ENCODE measurements at regions of chr14 and their contacts with region 1.

Region 1: GRCh38 chr14:102316743-102317563 is 2.6 kb upstream of the ZNF839 start:
- DNase-seq: peak; percentile 91
- H3K4me3 Mint-ChIP-seq: peak overlapping the region; percentile 83
- H3K27ac Mint-ChIP-seq: peak overlapping the region; percentile 89
- H3K4me1 Mint-ChIP-seq: peaks cover 53% of the 10 kb centered on the region
- H3K27me3 Mint-ChIP-seq: no peaks in the 10 kb centered on the region

Region 2: DNA sequence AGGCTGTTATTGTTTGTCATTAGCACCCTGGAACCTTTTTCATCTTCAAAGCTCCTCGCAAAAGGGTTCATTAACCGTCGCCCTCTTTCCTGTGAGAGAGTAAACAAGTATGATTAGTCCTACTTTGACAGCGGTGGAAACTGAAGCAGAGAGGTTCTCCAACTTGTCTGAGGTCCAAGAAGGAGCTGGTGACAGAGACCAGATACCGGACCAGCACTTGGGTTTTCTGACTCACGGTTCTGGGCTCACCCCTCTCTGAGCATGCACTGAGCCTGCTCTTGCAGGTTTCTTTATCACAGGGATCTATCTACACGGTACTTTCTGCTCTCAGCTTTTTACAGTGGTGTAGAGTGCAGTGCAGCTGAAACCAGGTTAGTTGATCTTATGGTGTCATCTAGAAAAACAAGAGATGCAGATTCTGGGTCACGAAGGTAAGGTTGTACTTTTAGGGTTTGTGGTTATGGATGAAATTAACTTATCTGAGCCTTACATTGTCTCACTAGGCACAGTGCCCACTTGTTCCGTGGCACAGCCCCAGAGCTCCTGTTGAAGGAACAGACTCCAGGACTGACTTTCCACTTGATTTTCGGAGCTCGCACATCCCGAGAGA is 493.3 kb before region 1 on chr14:
- intact Hi-C with region 1: loop called (anchors 5 kb)
- DNase-seq: peak; percentile 75
- H3K4me3 Mint-ChIP-seq: peak overlapping the region; percentile 75
- H3K27ac Mint-ChIP-seq: peak overlapping the region; percentile 97
- H3K4me1 Mint-ChIP-seq: peaks cover 80% of the 10 kb centered on the region
- H3K27me3 Mint-ChIP-seq: no peaks in the 10 kb centered on the region

Region 3: GRCh38 chr14:101964297-101965144 is 352.4 kb before region 1 on chr14 and contains the start of gene DYNC1H1:
- intact Hi-C with region 1: loop called (anchors 1 kb)
- DNase-seq: peak; percentile 88
- H3K4me3 Mint-ChIP-seq: peak within 1 kb of the TSS; percentile 92
- H3K27ac Mint-ChIP-seq: peak within 1 kb of the TSS; percentile 90
- H3K4me1 Mint-ChIP-seq: peaks cover 30% of the 10 kb centered on the region
- H3K27me3 Mint-ChIP-seq: no peaks in the 10 kb centered on the region
- total RNA-seq, gene DYNC1H1: 286 and 287 TPM in 2 replicates

Region 4: DNA sequence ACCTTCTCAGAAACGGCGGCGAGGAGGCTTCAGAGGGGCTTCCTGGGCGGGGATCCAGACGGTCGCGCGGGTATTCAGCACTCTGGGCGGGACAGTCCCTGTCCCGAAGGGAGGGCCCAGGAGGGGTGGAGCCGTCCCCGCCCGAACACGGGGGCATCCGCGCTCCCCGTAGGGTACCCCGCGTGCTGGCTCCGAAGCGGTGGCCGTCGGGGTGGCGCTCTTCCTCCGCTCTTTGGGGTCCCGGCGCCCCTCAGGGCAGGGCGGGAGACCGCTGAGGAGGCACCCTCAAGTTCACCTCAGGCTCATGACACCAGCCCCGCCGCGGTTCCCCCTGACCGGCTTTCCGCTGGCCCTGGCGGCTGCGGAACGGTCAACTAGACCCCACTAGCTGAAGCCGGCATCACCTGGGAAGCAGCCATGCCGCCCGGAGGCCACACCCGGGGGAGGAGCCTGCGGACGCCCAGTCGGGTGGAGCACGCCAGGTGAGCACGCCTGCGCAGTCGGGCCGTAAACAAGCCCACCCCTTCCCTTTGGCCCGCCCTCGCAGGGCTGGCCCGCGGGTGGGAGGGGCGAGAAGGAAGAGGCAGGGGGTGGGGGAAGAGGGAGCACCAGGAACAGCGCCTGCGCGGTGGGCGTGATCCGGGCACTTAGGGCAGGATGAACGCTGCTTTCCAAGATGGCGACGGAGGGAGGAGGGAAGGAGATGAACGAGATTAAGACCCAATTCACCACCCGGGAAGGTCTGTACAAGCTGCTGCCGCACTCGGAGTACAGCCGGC is 177.5 kb before region 1 on chr14 and contains the start of gene WDR20:
- intact Hi-C with region 1: loop called (anchors 5 kb)
- DNase-seq: peak; percentile 98
- H3K4me3 Mint-ChIP-seq: peak within 1 kb of the TSS; percentile 94
- H3K27ac Mint-ChIP-seq: peak within 1 kb of the TSS; percentile 94
- H3K4me1 Mint-ChIP-seq: peaks cover 17% of the 10 kb centered on the region
- H3K27me3 Mint-ChIP-seq: no peaks in the 10 kb centered on the region
- total RNA-seq, gene WDR20: 35.3 and 37.0 TPM in 2 replicates

Region 5: DNA sequence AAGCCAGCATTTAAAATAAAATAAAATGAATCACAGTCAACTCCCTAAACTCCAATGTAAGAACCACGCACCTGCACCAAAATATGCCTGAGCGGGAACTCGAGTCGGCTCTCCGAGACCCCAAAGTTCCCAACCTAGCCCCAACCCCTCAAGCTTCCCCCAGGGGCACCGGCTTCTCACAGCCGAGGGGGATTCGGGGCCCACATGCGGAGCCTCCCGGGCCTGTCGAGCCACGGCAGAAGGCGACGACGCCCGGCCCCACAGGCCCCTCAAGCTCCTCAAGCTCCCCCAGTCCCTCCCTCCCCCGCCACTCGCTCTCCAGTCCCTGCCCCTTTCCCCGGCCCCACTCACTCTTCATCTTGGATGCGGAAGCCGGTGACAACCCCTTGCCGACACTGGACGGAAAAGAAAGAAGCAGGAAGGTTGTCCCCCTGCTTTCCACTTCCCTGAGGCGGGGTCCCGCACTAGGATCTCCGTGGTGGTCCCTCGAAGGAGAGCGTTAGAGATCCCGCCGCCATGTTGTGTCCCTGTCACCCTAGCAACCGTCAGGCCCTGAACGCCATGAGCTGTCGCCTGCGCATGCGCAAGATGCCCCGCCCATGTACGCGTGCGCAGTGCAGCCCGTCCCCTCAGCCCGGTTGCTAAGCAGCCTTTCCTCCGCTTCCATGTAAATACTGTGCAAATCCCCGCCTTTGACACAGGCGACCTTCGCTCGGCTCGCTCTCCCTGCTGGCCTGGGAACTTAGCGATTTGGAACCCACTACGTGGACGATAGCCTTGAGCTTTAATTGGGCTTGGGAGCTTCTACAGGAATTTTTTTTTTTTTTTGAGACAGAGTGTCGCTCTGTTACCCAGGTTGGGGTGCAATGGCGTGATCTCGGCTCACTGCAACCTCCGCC is 12.1 kb before region 1 on chr14 and contains the start of gene MOK:
- intact Hi-C with region 1: loop called (anchors 1 kb)
- DNase-seq: peak; percentile 98
- H3K4me3 Mint-ChIP-seq: peak within 1 kb of the TSS; percentile 92
- H3K27ac Mint-ChIP-seq: peak within 1 kb of the TSS; percentile 92
- H3K4me1 Mint-ChIP-seq: peaks cover 11% of the 10 kb centered on the region
- H3K27me3 Mint-ChIP-seq: peaks cover 16% of the 10 kb centered on the region
- total RNA-seq, gene MOK: 4.8 and 6.8 TPM in 2 replicates

Region 6: DNA sequence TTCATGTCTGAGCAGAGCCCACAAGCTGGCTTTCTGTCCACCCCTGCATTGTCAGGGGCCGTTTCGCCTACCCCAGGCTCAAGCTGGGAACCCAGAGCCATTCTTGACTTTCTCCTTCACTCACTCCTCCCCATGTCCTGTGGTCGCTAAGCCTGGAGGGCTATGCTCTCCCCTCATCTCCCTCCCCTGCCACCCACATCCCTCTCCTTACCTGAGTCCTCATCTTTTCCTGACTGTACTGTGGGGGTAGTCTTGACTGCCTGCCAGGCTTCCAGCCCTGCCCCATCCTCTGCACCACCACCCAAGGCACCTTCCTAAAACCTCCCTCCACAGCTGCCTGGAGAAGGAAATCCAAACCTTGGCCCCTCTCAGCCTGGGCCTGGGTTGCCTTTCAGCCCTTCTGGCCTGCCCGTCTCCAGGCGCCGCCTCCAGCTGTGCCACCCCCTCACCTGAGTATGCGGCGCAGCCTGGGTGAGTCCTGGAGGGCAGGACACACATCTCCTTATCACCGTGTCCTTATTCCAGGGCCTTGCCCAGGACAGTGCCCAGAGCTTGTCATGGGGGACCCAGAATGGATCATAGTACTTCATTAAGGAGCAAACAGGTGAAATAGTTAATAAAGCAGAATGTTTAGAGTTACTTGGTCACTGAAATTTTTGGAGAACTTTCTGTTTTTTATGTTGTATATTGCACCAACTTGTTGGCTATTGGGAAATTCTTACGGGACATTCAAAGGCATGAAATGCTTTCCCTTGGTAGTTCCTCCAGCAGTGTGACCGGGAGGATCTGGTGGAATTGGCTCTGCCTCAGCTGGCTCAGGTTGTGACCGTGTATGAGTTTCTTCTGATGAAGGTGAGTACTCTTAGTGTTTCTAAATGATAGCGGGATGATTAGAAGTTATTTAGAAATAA is 17.1 kb after region 1 on chr14:
- intact Hi-C with region 1: no loop called
- DNase-seq: no peak
- H3K4me3 Mint-ChIP-seq: no peak overlapping the region
- H3K27ac Mint-ChIP-seq: no peak overlapping the region
- H3K4me1 Mint-ChIP-seq: no peaks in the 10 kb centered on the region
- H3K27me3 Mint-ChIP-seq: no peaks in the 10 kb centered on the region

Region 7: GRCh38 chr14:102516531-102517415 is 199.8 kb after region 1 on chr14:
- intact Hi-C with region 1: loop called (anchors 2 kb)
- DNase-seq: peak; percentile 54
- H3K4me3 Mint-ChIP-seq: peak overlapping the region; percentile 80
- H3K27ac Mint-ChIP-seq: peak overlapping the region; percentile 43
- H3K4me1 Mint-ChIP-seq: peaks cover 3% of the 10 kb centered on the region
- H3K27me3 Mint-ChIP-seq: peaks cover 6% of the 10 kb centered on the region

Region 8: GRCh38 chr14:103333754-103334643 is 1017.0 kb after region 1 on chr14 and contains the start of gene EIF5:
- intact Hi-C with region 1: loop called (anchors 5 kb)
- DNase-seq: peak; percentile 98
- H3K4me3 Mint-ChIP-seq: peak within 1 kb of the TSS; percentile 89
- H3K27ac Mint-ChIP-seq: peak within 1 kb of the TSS; percentile 97
- H3K4me1 Mint-ChIP-seq: peaks cover 30% of the 10 kb centered on the region
- H3K27me3 Mint-ChIP-seq: peaks cover 2% of the 10 kb centered on the region
- total RNA-seq, gene EIF5: 261 TPM in 2 replicates